H1 (cell line): ENCODE measurements at regions of chr12 and their contacts with region 1.

Region 1: GRCh38 chr12:13941258-13942249 is 39.8 kb downstream of the GRIN2B start:
- DNase-seq: peak; percentile 62 to 64
- H3K4me3 ChIP-seq: peak overlapping the region in 3 of 4 experiments; percentile 4 to 45 (median 20); a peak in 6 of 8 replicates
- H3K27ac ChIP-seq: no peak overlapping the region
- H3K4me1 ChIP-seq: peaks cover 6 to 21% (median 17%) of the 10 kb centered on the region in 4 experiments
- H3K27me3 ChIP-seq: no peaks in the 10 kb centered on the region
- CTCF ChIP-seq: peak; percentile 4 to 80 (median 71)
- EP300 ChIP-seq: no peak
- POLR2A ChIP-seq: no peak
- RAD21 ChIP-seq: peak; percentile 82 to 87

Region 2: GRCh38 chr12:13740150-13740547 is 201.4 kb before region 1 on chr12:
- CTCF ChIA-PET with region 1: interaction called, 12 read pairs
- POLR2A ChIA-PET with region 1: interaction called, 3 read pairs
- DNase-seq: no peak
- H3K4me3 ChIP-seq: no peak overlapping the region
- H3K27ac ChIP-seq: no peak overlapping the region
- H3K4me1 ChIP-seq: peaks cover 0 to 4% (median 2%) of the 10 kb centered on the region in 4 experiments; a peak in 3 of 7 replicates
- H3K27me3 ChIP-seq: no peaks in the 10 kb centered on the region; a peak in 2 of 7 replicates
- CTCF ChIP-seq: no peak
- EP300 ChIP-seq: no peak
- POLR2A ChIP-seq: no peak
- RAD21 ChIP-seq: no peak

Region 3: DNA sequence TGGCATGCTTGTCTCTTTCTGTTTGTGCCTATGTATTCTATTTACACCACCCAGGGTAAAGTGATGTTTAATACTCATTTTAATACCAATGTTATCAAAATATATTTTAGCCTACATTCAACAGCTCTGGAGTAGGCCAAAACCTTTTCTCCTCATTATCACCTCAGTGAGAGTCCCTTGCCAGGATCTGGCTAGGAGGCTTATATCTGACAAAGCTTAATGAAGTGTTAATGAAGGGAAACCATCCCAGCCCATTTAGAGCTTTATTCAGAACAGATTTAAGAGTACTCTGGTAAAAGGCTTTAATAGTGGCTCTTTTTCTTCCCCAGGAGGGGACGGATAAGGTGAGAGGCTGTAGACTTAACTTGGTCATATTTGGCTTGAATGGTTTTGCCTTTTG is 97.7 kb before region 1 on chr12:
- CTCF ChIA-PET with region 1: no interaction called
- POLR2A ChIA-PET with region 1: no interaction called
- DNase-seq: no peak
- H3K4me3 ChIP-seq: no peak overlapping the region
- H3K27ac ChIP-seq: no peak overlapping the region
- H3K4me1 ChIP-seq: no peaks in the 10 kb centered on the region
- H3K27me3 ChIP-seq: no peaks in the 10 kb centered on the region
- CTCF ChIP-seq: no peak
- EP300 ChIP-seq: no peak
- POLR2A ChIP-seq: no peak
- RAD21 ChIP-seq: no peak

Region 4: GRCh38 chr12:13924286-13924685 is 17.3 kb before region 1 on chr12:
- CTCF ChIA-PET with region 1: interaction called, 21 read pairs
- POLR2A ChIA-PET with region 1: interaction called, 5 read pairs
- DNase-seq: no peak
- H3K4me3 ChIP-seq: no peak overlapping the region
- H3K27ac ChIP-seq: no peak overlapping the region
- H3K4me1 ChIP-seq: no peaks in the 10 kb centered on the region
- H3K27me3 ChIP-seq: no peaks in the 10 kb centered on the region
- CTCF ChIP-seq: no peak
- EP300 ChIP-seq: no peak
- POLR2A ChIP-seq: no peak
- RAD21 ChIP-seq: no peak

Region 5: DNA sequence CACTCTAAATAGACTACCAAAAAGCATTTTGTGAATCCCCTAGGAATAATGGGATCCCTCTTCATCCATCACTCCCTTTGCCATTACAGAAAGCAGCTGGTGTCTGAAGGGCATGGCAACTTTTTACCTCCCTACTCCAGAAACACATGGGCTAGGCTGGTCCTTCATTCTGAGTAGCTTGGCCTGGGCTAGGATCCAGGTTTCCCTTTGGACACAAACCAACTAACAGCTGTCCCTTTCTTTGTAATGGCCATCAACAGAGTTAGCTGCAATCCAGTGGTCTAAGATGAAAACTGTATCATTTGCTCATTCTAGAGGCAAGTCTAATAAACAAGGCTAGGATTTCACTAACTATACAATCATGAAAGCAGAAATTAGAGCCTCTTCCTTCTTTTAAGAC is 32.4 kb after region 1 on chr12:
- CTCF ChIA-PET with region 1: interaction called, 16 read pairs
- POLR2A ChIA-PET with region 1: interaction called, 5 read pairs
- DNase-seq: no peak
- H3K4me3 ChIP-seq: no peak overlapping the region
- H3K27ac ChIP-seq: no peak overlapping the region
- H3K4me1 ChIP-seq: peaks cover 0 to 15% (median 5%) of the 10 kb centered on the region in 4 experiments; a peak in 2 of 7 replicates
- H3K27me3 ChIP-seq: peaks cover 0 to 5% (median 2%) of the 10 kb centered on the region in 4 experiments; a peak in 3 of 7 replicates
- CTCF ChIP-seq: no peak
- EP300 ChIP-seq: no peak
- POLR2A ChIP-seq: no peak
- RAD21 ChIP-seq: no peak

Region 6: DNA sequence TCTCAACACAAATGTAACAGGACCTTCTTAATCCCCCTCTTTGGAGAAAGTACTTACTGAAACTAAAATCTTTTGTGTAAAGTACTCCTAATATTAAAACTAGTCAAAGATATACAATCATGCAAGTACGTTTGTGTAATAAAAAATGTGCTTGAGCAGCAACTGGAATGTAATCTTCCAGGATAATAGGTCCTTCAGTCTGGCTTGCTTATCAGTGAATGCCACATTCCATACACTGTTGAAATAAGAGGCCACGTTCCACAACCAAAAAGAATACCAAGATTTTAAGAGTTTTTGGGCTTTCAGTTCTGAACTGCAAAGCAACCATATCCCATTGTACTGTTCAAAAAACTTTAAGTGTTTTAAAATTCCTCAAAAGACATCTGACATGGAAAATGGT is 66.1 kb after region 1 on chr12:
- CTCF ChIA-PET with region 1: no interaction called
- POLR2A ChIA-PET with region 1: no interaction called
- DNase-seq: no peak
- H3K4me3 ChIP-seq: no peak overlapping the region
- H3K27ac ChIP-seq: no peak overlapping the region
- H3K4me1 ChIP-seq: no peaks in the 10 kb centered on the region
- H3K27me3 ChIP-seq: no peaks in the 10 kb centered on the region
- CTCF ChIP-seq: no peak
- EP300 ChIP-seq: no peak
- POLR2A ChIP-seq: no peak
- RAD21 ChIP-seq: no peak

Region 7: GRCh38 chr12:14026537-14026936 is 85.0 kb after region 1 on chr12:
- CTCF ChIA-PET with region 1: no interaction called
- POLR2A ChIA-PET with region 1: no interaction called
- DNase-seq: no peak
- H3K4me3 ChIP-seq: no peak overlapping the region
- H3K27ac ChIP-seq: no peak overlapping the region
- H3K4me1 ChIP-seq: no peaks in the 10 kb centered on the region
- H3K27me3 ChIP-seq: no peaks in the 10 kb centered on the region
- CTCF ChIP-seq: no peak
- EP300 ChIP-seq: no peak
- POLR2A ChIP-seq: no peak
- RAD21 ChIP-seq: no peak